Caco-2 (cell line): ENCODE measurements at regions of chr9 and their contacts with region 1.

Region 1: GRCh38 chr9:110638381-110638954 is 30.1 kb upstream of the MUSK start:
- DNase-seq: no peak
- H3K4me3 ChIP-seq: no peak overlapping the region
- H3K4me3 Mint-ChIP-seq: no peak overlapping the region
- H3K27ac Mint-ChIP-seq: no peak overlapping the region
- H3K4me1 ChIP-seq: no peaks in the 10 kb centered on the region
- H3K4me1 Mint-ChIP-seq: no peaks in the 10 kb centered on the region
- H3K27me3 ChIP-seq: no peaks in the 10 kb centered on the region
- H3K27me3 Mint-ChIP-seq: peaks cover 3% of the 10 kb centered on the region
- CTCF ChIP-seq: peak in 1 of 2 experiments; percentile 31

Region 2: DNA sequence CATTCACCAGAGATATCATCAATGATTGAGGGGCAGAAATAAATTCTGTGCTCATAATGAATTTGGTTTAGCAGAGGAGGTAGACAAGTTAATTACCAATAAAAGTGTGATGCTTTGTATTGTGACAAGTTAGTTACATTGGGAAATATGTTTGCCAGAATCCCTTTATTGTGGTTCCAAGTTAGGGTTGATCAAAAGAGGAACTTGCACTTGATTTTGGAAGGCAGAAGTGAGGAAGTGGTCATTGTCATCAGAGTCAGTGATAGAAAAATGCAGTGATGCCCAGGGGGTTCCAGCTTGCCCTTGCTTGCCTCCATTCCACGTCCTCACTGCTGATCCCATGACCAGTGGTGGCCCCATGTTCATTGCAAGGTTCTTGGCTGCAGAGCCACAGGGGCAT is 128.7 kb before region 1 on chr9:
- CTCF ChIA-PET with region 1: no interaction called
- POLR2A ChIA-PET with region 1: no interaction called
- intact Hi-C with region 1: no loop called
- DNase-seq: no peak
- H3K4me3 ChIP-seq: no peak overlapping the region
- H3K4me3 Mint-ChIP-seq: no peak overlapping the region
- H3K27ac Mint-ChIP-seq: no peak overlapping the region
- H3K4me1 ChIP-seq: no peaks in the 10 kb centered on the region
- H3K4me1 Mint-ChIP-seq: no peaks in the 10 kb centered on the region
- H3K27me3 ChIP-seq: no peaks in the 10 kb centered on the region
- H3K27me3 Mint-ChIP-seq: peaks cover 31% of the 10 kb centered on the region
- CTCF ChIP-seq: no peak

Region 3: DNA sequence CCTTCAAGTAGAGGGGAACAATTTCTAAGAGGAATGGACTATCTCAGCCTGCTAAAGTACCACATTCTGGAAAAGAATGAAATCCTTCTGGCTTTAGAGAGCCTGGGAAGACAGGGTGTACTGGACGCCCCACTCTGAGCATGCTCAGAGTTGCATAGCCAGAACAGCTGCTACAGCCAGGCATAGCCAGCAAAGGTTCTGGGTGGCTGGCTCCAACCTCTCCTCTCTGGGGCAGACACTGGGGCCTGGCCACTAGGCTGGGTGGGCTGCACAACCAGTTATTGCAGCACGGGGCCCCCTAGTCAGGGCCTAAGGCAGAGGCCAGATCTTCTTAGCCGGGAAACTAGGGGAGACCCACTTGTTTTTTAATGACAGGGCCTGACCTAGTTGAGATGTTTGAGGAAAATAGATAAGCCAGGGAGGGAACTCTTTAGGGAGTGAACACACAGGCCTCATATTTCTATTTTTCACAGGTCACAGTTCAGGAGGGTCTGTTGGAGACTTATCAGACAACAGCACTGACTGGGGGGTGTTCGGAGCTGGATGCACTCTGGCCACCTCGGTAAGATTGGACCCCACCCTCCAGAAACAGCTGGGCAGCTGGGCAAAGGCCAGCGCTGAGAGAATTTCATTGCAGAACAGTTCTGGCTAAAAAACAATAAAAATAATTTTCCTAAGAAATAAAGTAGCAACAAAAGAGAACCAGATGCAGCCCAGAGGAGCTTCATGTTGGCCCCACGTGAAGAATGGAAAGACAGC is 256.9 kb after region 1 on chr9:
- CTCF ChIA-PET with region 1: no interaction called
- POLR2A ChIA-PET with region 1: no interaction called
- intact Hi-C with region 1: loop called (anchors 5 kb)
- DNase-seq: no peak
- H3K4me3 ChIP-seq: no peak overlapping the region
- H3K4me3 Mint-ChIP-seq: no peak overlapping the region
- H3K27ac Mint-ChIP-seq: no peak overlapping the region
- H3K4me1 ChIP-seq: no peaks in the 10 kb centered on the region
- H3K4me1 Mint-ChIP-seq: no peaks in the 10 kb centered on the region
- H3K27me3 ChIP-seq: no peaks in the 10 kb centered on the region
- H3K27me3 Mint-ChIP-seq: no peaks in the 10 kb centered on the region
- CTCF ChIP-seq: no peak

Region 4: GRCh38 chr9:111149016-111149759 is 510.7 kb after region 1 on chr9:
- CTCF ChIA-PET with region 1: no interaction called
- POLR2A ChIA-PET with region 1: no interaction called
- intact Hi-C with region 1: loop called (anchors 5 kb)
- DNase-seq: peak in 1 of 2 experiments; percentile 8
- H3K4me3 ChIP-seq: no peak overlapping the region
- H3K4me3 Mint-ChIP-seq: no peak overlapping the region
- H3K27ac Mint-ChIP-seq: no peak overlapping the region
- H3K4me1 ChIP-seq: no peaks in the 10 kb centered on the region
- H3K4me1 Mint-ChIP-seq: no peaks in the 10 kb centered on the region
- H3K27me3 ChIP-seq: no peaks in the 10 kb centered on the region
- H3K27me3 Mint-ChIP-seq: peaks cover 6% of the 10 kb centered on the region
- CTCF ChIP-seq: peak in 1 of 2 experiments; percentile 28

Region 5: GRCh38 chr9:111483862-111484571 is 845.5 kb after region 1 on chr9 and contains the start of gene ECPAS:
- CTCF ChIA-PET with region 1: no interaction called
- POLR2A ChIA-PET with region 1: no interaction called
- intact Hi-C with region 1: no loop called
- DNase-seq: peak; percentile 87 to 88
- H3K4me3 ChIP-seq: peak within 1 kb of the TSS; percentile 53
- H3K4me3 Mint-ChIP-seq: peak within 1 kb of the TSS; percentile 85
- H3K27ac Mint-ChIP-seq: peak within 1 kb of the TSS; percentile 70
- H3K4me1 ChIP-seq: 0 out of 2 replicates have a peak, but pooled peaks cover 14% of the 10 kb centered on the region
- H3K4me1 Mint-ChIP-seq: peaks cover 11% of the 10 kb centered on the region
- H3K27me3 ChIP-seq: no peaks in the 10 kb centered on the region
- H3K27me3 Mint-ChIP-seq: no peaks in the 10 kb centered on the region
- CTCF ChIP-seq: no peak
- total RNA-seq, gene ECPAS: 66.8 and 77.0 TPM in 2 replicates